ENCODE measurements at regions of chr1 and their contacts with region 1.

Region 1: DNA sequence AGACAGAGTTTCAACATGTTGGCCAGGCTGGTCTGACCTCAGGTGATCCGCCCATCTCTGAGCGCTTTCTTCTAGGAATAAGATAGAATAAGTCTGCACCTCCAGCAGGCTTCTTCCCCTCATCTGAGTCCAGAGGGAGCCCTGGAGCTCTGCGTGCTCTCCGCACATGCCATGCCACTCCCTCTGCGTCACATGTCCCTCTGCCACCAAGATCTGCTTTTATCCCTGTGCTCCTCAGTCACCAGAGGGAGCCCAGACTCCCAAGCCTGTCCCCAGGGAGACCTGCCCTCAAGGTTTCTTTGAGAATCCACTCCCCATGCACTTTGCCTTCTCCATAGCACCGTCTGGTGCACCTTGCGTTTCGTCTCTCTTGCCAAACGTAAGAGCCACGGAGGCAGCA is 213.0 kb downstream of the CAMTA1 start:
- DNase-seq: peak in 1 of 2 donors; percentile 14
- ATAC-seq: peak in 7 of 8 donors; percentile 61 to 91 (median 79)
- H3K4me3 ChIP-seq: no peak overlapping the region
- H3K27ac ChIP-seq: no peak overlapping the region
- H3K4me1 ChIP-seq: no peaks in the 10 kb centered on the region
- H3K27me3 ChIP-seq: no peaks in the 10 kb centered on the region
- CTCF ChIP-seq: peak in 7 of 9 donors; percentile 26 to 59 (median 43)

Region 2: DNA sequence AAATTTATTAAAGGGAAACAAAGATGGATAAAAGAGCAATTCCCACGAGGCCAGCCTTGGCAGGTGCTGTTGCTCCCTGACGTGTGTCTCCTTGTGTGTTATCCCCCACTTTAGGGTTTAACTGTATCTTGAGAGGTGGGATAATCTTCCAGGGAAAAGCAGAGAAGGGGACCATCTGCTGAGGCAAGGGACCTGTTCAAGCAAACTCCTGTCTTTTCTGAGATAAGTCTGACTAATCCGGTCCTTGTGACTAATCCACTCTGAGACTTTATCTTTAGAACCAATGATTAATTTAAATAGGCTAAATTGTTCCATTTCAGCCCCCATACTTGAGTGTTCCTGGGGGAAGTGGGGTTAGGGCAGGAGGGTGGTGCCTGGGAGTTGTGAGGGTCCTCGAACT is 49.4 kb before region 1 on chr1:
- intact Hi-C with region 1: loop called in 1 of 10 experiments (anchors 10 kb)
- DNase-seq: no peak
- ATAC-seq: no peak
- H3K4me3 ChIP-seq: no peak overlapping the region
- H3K27ac ChIP-seq: no peak overlapping the region
- H3K4me1 ChIP-seq: no peaks in the 10 kb centered on the region
- H3K27me3 ChIP-seq: no peaks in the 10 kb centered on the region
- CTCF ChIP-seq: no peak